ENCODE measurements at regions of chr6 and their contacts with region 1.

Region 1: DNA sequence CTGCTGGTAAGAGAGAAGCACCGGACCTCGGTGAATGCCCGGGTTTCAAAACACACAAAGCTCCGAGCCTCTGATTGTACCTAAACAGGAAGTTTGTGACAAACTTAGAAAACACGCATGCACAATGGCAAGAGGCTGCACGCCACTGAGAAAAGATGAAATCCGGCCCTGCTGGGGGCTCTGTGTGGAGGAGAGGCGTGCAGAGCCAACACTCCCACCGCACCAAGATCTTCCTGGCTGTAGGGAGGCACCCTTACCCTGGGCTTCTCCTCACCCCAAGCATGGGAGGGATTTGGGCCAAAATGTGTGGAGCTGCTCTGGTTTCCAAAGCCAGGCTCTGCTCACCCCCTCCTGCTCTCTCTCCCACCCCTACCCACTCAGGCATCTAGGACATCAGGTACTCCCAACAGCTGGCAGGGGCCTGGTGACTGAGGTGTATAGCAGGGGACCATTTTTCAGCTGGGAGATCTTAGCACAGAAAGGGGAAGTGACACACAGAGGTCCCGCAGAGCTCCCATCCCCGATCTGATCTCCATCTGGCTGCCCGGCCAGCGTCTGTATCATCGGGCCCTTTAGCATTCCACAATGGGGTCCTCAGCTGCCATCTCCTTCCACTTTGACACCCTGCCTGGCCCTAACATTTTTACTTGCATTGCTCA is 84.2 kb downstream of the TRERF1 start:
- DNase-seq: peak in 5 of 9 experiments; percentile 17 to 66 (median 44)
- ATAC-seq: peak; percentile 36
- H3K4me3 ChIP-seq: peak overlapping the region; percentile 22 to 28
- H3K4me3 Mint-ChIP-seq: peak overlapping the region; percentile 81
- H3K27ac ChIP-seq: peak overlapping the region; percentile 44 to 82
- H3K27ac Mint-ChIP-seq: peak overlapping the region; percentile 92
- H3K4me1 ChIP-seq: peaks cover 61% of the 10 kb centered on the region
- H3K4me1 Mint-ChIP-seq: peaks cover 84% of the 10 kb centered on the region
- H3K27me3 ChIP-seq: no peaks in the 10 kb centered on the region
- H3K27me3 Mint-ChIP-seq: no peaks in the 10 kb centered on the region
- CTCF ChIP-seq: no peak

Region 2: DNA sequence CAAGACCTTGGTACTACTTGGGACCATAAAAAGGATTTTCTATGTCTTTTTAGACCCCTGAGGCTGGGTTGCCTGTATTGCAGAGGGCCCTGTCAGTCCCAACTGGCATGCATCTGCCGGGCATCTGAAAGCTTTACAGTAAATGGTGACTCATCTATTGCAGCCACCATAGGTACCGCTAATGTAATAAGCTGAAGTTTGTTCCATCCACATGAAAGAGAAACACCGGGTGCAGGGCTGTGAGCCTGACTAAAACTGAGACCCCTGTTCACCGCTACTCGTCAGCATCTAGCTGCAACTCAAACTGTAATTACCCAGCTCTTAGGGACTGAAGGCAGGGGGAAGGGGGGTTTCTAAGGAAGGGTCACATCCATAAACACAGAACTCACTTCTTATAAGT is 34.7 kb after region 1 on chr6:
- CTCF ChIA-PET with region 1: no interaction called
- POLR2A ChIA-PET with region 1: interaction called, 7 read pairs
- intact Hi-C with region 1: loop called in 1 of 2 experiments (anchors 5 kb)
- DNase-seq: peak in 6 of 9 experiments; percentile 34 to 65 (median 46)
- ATAC-seq: peak; percentile 75
- H3K4me3 ChIP-seq: no peak overlapping the region
- H3K4me3 Mint-ChIP-seq: peak overlapping the region; percentile 2
- H3K27ac ChIP-seq: peak overlapping the region in 1 of 2 experiments; percentile 59
- H3K27ac Mint-ChIP-seq: peak overlapping the region; percentile 67
- H3K4me1 ChIP-seq: peaks cover 54% of the 10 kb centered on the region
- H3K4me1 Mint-ChIP-seq: peaks cover 86% of the 10 kb centered on the region
- H3K27me3 ChIP-seq: no peaks in the 10 kb centered on the region
- H3K27me3 Mint-ChIP-seq: no peaks in the 10 kb centered on the region
- CTCF ChIP-seq: no peak

Region 3: DNA sequence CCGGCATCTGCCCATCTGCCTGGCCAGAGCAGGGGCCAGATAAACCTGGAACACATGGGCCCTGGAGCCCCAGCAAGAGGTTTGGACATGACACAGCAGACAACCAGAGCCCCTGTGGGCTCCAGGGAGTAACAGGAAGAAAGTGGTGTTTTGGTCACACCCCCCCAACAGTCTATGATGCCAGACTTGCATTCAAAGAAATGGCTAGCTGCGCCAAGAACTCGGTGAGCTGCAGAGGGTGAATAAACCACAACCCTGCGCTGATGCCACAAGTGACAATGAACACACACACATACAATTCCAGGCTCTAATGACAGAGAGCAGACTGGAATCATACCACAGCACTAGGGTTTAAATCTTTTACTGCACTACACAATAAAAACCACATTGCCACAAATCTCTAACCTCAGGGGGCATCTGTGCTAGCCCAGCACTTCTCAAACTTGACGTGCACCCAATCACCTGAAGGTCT is 50.2 kb after region 1 on chr6:
- CTCF ChIA-PET with region 1: interaction called, 3 read pairs
- POLR2A ChIA-PET with region 1: interaction called, 4 read pairs
- intact Hi-C with region 1: loop called in 1 of 2 experiments (anchors 2 kb)
- DNase-seq: peak; percentile 25 to 88 (median 61)
- ATAC-seq: peak; percentile 86
- H3K4me3 ChIP-seq: no peak overlapping the region
- H3K4me3 Mint-ChIP-seq: peak overlapping the region; percentile 49
- H3K27ac ChIP-seq: no peak overlapping the region
- H3K27ac Mint-ChIP-seq: peak overlapping the region; percentile 79
- H3K4me1 ChIP-seq: peaks cover 40% of the 10 kb centered on the region
- H3K4me1 Mint-ChIP-seq: peaks cover 69% of the 10 kb centered on the region
- H3K27me3 ChIP-seq: no peaks in the 10 kb centered on the region
- H3K27me3 Mint-ChIP-seq: no peaks in the 10 kb centered on the region
- CTCF ChIP-seq: no peak

Measured in CD8-positive, alpha-beta T cell (primary cell).